K562 (cell line): ENCODE measurements at regions of chr10 and their contacts with region 1.

Region 1: GRCh38 chr10:60208676-60209269 is 180.9 kb downstream of the ANK3 start:
- DNase-seq: peak; percentile 22 to 60 (median 28)
- ATAC-seq: peak; percentile 69
- H3K4me3 ChIP-seq: no peak overlapping the region
- H3K27ac ChIP-seq: no peak overlapping the region
- H3K4me1 ChIP-seq: no peaks in the 10 kb centered on the region
- H3K27me3 ChIP-seq: no peaks in the 10 kb centered on the region
- CTCF ChIP-seq: peak; percentile 69 to 92 (median 85)
- EP300 ChIP-seq: no peak
- POLR2A ChIP-seq: no peak
- RAD21 ChIP-seq: peak; percentile 96 to 99

Region 2: DNA sequence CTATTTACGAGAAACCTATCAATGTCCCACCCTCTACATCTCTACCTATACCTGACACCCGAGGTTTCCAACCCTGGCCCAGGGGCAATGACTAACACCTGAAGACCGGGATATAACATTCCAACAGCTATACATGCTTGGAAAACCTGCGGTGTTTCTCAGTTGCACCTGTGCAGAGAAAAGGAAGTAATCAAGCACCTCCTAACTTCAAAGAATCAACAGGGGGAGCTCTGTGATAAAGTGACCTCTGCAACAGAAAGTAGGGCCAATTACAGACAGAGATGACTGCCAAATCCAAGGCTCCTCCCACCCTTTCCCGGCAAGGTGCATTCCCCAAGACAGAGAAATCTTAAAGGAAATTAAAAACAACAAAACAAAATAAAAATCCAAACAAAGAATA is 343.7 kb before region 1 on chr10:
- CTCF ChIA-PET with region 1: no interaction called
- POLR2A ChIA-PET with region 1: no interaction called
- in situ Hi-C with region 1: no loop called
- intact Hi-C with region 1: loop called (anchors 10 kb)
- DNase-seq: peak; percentile 55 to 70 (median 58)
- ATAC-seq: peak; percentile 89
- H3K4me3 ChIP-seq: no peak overlapping the region
- H3K27ac ChIP-seq: no peak overlapping the region
- H3K4me1 ChIP-seq: peaks cover 3 to 25% of the 10 kb centered on the region in 2 experiments; a peak in 3 of 5 replicates
- H3K27me3 ChIP-seq: no peaks in the 10 kb centered on the region
- CTCF ChIP-seq: peak; percentile 63 to 88 (median 64)
- EP300 ChIP-seq: no peak
- POLR2A ChIP-seq: no peak
- RAD21 ChIP-seq: peak; percentile 73 to 90

Region 3: DNA sequence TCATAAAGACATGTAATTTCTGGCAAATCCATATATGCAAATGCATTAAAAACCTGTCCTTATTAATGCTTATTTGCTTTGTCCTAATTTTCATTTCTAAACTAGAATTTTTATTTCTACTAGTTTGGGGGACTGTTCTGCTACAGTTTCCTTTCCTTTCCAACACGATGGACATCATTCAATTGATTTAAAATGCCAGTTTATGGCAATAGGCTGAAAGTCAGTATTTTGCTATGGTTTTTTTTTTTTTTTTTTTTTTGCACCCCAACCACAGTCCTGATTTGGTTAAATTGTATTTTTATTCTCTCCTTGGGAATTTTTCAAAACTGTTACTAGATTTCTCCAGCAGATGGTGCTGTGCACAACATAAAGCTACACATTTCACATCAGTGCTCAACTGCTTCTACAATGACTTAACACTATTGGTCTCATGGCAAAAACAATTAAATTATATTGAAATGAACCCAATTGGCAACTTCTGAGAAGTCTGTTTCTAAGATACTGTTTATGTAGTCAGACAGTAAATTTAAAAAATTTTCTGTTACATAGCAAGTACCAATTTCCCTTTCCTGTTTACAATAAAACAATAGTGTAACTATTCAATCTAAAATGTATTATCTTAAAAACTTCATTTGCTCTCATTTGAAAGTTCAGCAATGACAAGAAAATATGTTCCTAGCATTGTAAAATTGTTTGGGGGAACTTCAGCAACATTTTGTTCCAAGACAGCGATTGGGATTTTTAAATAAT is 108.6 kb before region 1 on chr10:
- CTCF ChIA-PET with region 1: interaction called, 56 read pairs
- POLR2A ChIA-PET with region 1: no interaction called
- in situ Hi-C with region 1: loop called (anchors 10 kb)
- intact Hi-C with region 1: loop called (anchors 1 kb)
- DNase-seq: peak; percentile 53 to 77 (median 60)
- ATAC-seq: peak; percentile 83
- H3K4me3 ChIP-seq: no peak overlapping the region
- H3K27ac ChIP-seq: peak overlapping the region; percentile 54; the same call in 1 of the 3 replicates
- H3K4me1 ChIP-seq: peaks cover 0 to 7% of the 10 kb centered on the region in 2 experiments; a peak in 2 of 5 replicates
- H3K27me3 ChIP-seq: no peaks in the 10 kb centered on the region
- CTCF ChIP-seq: peak; percentile 55 to 89 (median 61); a peak in 4 of 6 replicates
- EP300 ChIP-seq: peak; percentile 50; the same call in 1 of the 2 replicates
- POLR2A ChIP-seq: no peak
- RAD21 ChIP-seq: peak; percentile 65 to 85

Region 4: GRCh38 chr10:60114765-60115586 is 93.8 kb before region 1 on chr10:
- CTCF ChIA-PET with region 1: interaction called, 49 read pairs
- POLR2A ChIA-PET with region 1: no interaction called
- in situ Hi-C with region 1: loop called (anchors 5 kb)
- intact Hi-C with region 1: loop called (anchors 1 kb)
- DNase-seq: peak; percentile 19 to 76 (median 44)
- ATAC-seq: peak; percentile 92
- H3K4me3 ChIP-seq: no peak overlapping the region
- H3K27ac ChIP-seq: no peak overlapping the region
- H3K4me1 ChIP-seq: no peaks in the 10 kb centered on the region
- H3K27me3 ChIP-seq: no peaks in the 10 kb centered on the region
- CTCF ChIP-seq: peak; percentile 73 to 84 (median 74)
- EP300 ChIP-seq: no peak
- POLR2A ChIP-seq: no peak
- RAD21 ChIP-seq: peak; percentile 88 to 93

Region 5: GRCh38 chr10:60388709-60389301 is 180.0 kb after region 1 on chr10:
- CTCF ChIA-PET with region 1: no interaction called
- POLR2A ChIA-PET with region 1: no interaction called
- in situ Hi-C with region 1: no loop called
- intact Hi-C with region 1: no loop called
- DNase-seq: no peak
- ATAC-seq: no peak
- H3K4me3 ChIP-seq: no peak overlapping the region
- H3K27ac ChIP-seq: no peak overlapping the region
- H3K4me1 ChIP-seq: no peaks in the 10 kb centered on the region
- H3K27me3 ChIP-seq: peaks cover 0 to 7% of the 10 kb centered on the region in 2 experiments; a peak in 3 of 5 replicates
- CTCF ChIP-seq: no peak
- EP300 ChIP-seq: no peak
- POLR2A ChIP-seq: no peak
- RAD21 ChIP-seq: no peak